A549 (cell line): ENCODE measurements at regions of chr19 and their contacts with region 1.

Region 1: DNA sequence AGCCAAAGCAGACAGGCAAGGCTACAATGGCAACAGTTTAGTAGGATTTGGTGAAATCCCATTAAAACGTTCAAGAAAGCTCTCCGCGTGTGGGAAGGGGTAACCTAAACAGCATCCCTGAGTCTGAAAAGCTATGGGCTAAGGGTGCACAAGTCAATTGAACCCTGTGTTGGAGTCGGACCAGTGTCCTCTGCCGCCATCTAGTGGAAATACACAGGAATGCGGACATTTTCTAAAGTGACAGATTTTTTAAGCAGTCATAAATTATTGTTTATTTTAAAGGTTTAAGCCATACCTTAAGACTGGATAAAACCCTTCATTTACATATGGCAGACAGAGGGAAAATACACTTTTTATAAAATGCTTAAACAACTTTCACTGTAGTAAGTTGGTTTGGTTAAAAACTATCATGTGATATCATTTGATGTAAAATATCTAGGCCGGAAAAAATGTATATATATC is 26.5 kb upstream of the LSM14A start:
- DNase-seq: peak; percentile 73 to 75
- ATAC-seq: peak; percentile 66 to 81; a peak in 5 of 6 replicates
- H3K4me3 ChIP-seq: no peak overlapping the region
- H3K27ac ChIP-seq: no peak overlapping the region
- H3K4me1 ChIP-seq: no peaks in the 10 kb centered on the region
- CTCF ChIP-seq: peak; percentile 99
- EP300 ChIP-seq: no peak
- POLR2A ChIP-seq: no peak
- RAD21 ChIP-seq: peak; percentile 96 to 97

Region 2: DNA sequence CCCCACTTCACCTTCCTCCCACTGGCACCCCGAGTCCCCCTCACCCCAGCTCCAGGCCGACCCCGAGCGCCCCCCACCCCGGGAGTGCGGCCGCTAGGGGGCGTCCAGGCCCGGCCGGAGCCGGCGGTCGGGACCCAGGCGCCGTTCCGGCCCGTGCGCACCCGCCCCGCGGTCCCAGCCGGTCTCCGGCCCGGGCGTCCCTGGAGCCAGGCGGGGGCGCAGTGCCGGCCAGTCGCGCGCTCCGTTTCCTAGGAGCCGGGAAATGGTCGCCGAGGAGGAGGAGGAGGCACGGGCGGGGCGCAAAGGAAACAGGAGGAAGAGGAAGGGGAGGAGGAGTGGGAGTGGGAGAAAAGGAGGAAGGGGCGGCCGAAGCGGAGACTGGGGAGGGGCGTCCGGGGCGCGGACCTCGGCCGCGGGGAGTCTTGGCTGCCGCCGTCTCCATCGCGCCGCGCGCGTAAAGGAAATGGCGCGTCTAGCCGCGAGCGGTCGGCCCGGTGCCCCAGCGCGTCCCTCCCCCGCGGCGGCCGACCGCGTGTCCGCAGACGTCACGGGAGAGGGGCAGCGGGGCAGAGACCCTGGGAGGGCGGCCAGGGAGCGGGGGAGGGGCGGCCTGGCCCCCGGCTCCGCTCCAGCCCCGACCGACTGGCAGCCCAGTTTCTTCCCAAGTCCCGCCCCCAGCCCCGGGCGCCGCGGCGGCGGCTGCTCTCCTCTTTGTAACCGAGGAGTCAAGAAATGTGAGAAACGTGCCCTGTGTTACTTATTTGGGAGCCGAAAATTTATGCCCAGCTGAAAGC is 350.2 kb before region 1 on chr19:
- CTCF ChIA-PET with region 1: interaction called, 15 read pairs
- POLR2A ChIA-PET with region 1: no interaction called
- DNase-seq: peak; percentile 94 to 96
- ATAC-seq: peak; percentile 70 to 80
- H3K4me3 ChIP-seq: peak overlapping the region; percentile 88
- H3K27ac ChIP-seq: peak overlapping the region; percentile 96 to 97
- H3K4me1 ChIP-seq: peaks cover 28% of the 10 kb centered on the region
- CTCF ChIP-seq: peak; percentile 100
- EP300 ChIP-seq: peak; percentile 34 to 73; a peak in 1 of 5 replicates
- POLR2A ChIP-seq: peak; percentile 85
- RAD21 ChIP-seq: peak; percentile 42 to 87; a peak in 4 of 5 replicates

Region 3: DNA sequence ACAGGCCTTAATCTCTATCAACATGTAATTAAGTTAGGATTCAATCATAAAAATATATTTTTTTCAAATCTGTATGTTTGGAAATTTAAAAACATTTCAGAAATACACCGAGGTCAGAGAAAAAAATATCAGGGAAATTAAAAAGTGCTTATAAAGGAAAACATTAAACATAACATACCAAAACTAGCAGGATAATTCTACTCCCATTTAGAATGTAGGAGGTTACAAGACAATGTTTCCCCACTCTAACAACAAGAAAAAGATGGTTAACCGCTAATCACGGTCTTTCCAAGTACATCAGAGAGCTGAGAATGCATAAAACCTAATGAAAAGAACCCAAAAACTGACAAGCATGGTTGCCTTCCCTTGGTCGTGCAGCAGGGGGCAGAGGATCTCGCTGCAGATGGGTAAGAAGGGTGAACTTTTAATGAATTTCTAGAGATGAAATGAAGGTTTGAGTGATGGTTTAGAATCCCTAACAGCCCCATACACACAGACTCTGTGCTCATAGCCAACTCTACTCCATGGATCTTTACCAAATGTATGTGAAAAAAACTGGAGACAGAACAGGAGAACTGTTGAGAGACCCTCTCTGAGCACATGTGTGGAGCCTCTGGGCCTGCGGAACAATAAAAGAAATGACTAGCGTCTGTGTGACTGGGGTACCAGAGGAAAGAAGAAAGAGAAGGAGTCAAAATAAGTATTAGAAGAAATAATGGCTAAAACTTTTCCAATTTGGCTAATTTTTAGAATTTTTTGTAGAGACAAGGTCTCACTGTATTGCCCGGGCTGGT is 24.7 kb before region 1 on chr19:
- CTCF ChIA-PET with region 1: interaction called, 58 read pairs
- POLR2A ChIA-PET with region 1: no interaction called
- DNase-seq: peak; percentile 77 to 87
- ATAC-seq: peak; percentile 70 to 83; a peak in 5 of 6 replicates
- H3K4me3 ChIP-seq: no peak overlapping the region
- H3K27ac ChIP-seq: no peak overlapping the region
- H3K4me1 ChIP-seq: no peaks in the 10 kb centered on the region
- CTCF ChIP-seq: peak; percentile 85
- EP300 ChIP-seq: no peak
- POLR2A ChIP-seq: no peak
- RAD21 ChIP-seq: peak; percentile 66 to 84

Region 4: DNA sequence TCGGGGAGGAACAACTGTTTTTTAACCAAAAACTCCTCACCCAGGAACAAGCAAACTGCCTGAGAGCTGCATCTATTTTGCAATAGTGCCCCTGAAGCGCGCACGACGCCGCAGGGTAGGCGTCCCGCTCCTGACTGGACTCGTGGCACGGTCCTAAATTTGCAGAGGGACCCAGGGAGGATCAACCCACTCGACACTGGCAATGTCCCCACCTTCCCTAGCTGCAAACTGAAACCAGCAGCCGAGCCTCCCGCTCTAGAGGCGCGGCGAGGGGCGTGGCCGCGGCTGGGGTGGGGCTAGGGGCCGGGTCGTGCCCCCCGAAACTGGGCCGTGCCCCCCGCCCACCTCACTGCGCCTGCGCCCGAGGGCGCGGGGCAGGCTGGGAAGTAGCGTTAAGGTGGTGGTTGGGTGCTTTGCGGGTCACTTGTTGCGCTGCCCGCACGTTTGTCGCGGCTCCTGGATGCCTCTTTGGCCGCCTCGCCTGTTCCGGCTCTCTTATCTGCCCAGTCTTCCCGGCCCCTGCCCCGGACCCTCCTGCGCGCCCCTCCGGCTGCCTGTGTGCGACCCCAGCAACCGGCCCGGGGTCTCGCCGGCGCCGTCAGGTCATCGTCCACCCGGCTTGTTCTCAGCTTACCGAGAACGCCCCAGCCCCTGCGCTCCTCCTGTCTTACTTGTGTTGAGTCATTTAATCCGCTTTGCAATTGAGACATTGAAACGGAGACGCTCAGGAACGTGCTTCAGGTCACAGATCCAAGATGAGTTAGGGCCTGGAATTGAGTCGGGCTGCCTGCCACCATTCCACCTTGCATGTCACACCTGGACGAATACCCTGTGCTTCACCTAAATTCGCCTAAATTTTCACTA is 11.3 kb before region 1 on chr19:
- CTCF ChIA-PET with region 1: interaction called, 73 read pairs
- POLR2A ChIA-PET with region 1: interaction called, 6 read pairs
- DNase-seq: peak; percentile 93 to 99
- ATAC-seq: peak; percentile 94 to 97
- H3K4me3 ChIP-seq: peak overlapping the region; percentile 65
- H3K27ac ChIP-seq: peak overlapping the region; percentile 87 to 93
- H3K4me1 ChIP-seq: peaks cover 10% of the 10 kb centered on the region; the same call in 2 of the 3 replicates
- CTCF ChIP-seq: no peak
- EP300 ChIP-seq: no peak
- POLR2A ChIP-seq: peak; percentile 98
- RAD21 ChIP-seq: no peak

Region 5: DNA sequence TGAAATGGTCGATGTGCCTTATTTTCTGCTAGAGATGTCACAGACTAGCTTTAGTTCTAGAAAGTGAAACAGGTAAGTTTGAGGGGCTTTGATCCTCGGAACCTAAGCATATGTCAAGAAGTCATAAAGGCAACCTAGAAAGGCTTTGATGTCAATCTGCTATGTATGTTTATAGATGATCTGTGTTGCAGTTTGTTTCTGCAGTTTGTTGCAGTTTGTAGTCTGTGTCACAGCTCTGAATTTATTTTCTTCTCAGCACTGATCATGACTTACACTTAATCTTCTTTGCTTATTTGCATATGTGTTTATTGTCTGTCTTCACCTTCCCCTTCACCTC is 32.5 kb after region 1 on chr19:
- CTCF ChIA-PET with region 1: interaction called, 20 read pairs
- POLR2A ChIA-PET with region 1: no interaction called
- DNase-seq: no peak
- ATAC-seq: no peak
- H3K4me3 ChIP-seq: no peak overlapping the region
- H3K27ac ChIP-seq: 0 out of 6 replicates have a peak overlapping the region, but pooled peaks of 1 of the 2 experiments have one; percentile 7
- H3K4me1 ChIP-seq: peaks cover 90% of the 10 kb centered on the region
- CTCF ChIP-seq: no peak
- EP300 ChIP-seq: no peak
- POLR2A ChIP-seq: no peak
- RAD21 ChIP-seq: no peak